ENCODE measurements at regions of chr9 and their contacts with region 1.

Region 1: GRCh38 chr9:88710449-88710848 is 175.5 kb downstream of the NXNL2 start:
- DNase-seq: no peak
- H3K4me3 ChIP-seq: no peak overlapping the region
- H3K27ac ChIP-seq: no peak overlapping the region
- H3K4me1 ChIP-seq: no peaks in the 10 kb centered on the region
- H3K27me3 ChIP-seq: no peaks in the 10 kb centered on the region
- CTCF ChIP-seq: no peak
- POLR2A ChIP-seq: no peak

Region 2: GRCh38 chr9:88411483-88411882 is 299.0 kb before region 1 on chr9:
- intact Hi-C with region 1: no loop called
- DNase-seq: no peak
- H3K4me3 ChIP-seq: no peak overlapping the region
- H3K27ac ChIP-seq: no peak overlapping the region
- H3K4me1 ChIP-seq: peaks cover 0 to 16% (median 5%) of the 10 kb centered on the region in 3 donors
- H3K27me3 ChIP-seq: no peaks in the 10 kb centered on the region
- CTCF ChIP-seq: no peak
- POLR2A ChIP-seq: no peak

Region 3: GRCh38 chr9:88777498-88778312 is 67.3 kb after region 1 on chr9:
- intact Hi-C with region 1: loop called (anchors 10 kb)
- DNase-seq: no peak
- H3K4me3 ChIP-seq: no peak overlapping the region
- H3K27ac ChIP-seq: peak overlapping the region in 1 of 4 donors; percentile 35
- H3K4me1 ChIP-seq: peaks cover 0 to 31% (median 21%) of the 10 kb centered on the region in 3 donors
- H3K27me3 ChIP-seq: no peaks in the 10 kb centered on the region
- CTCF ChIP-seq: no peak
- POLR2A ChIP-seq: no peak

Region 4: GRCh38 chr9:89260525-89260924 is 550.1 kb after region 1 on chr9:
- intact Hi-C with region 1: no loop called
- DNase-seq: no peak
- H3K4me3 ChIP-seq: no peak overlapping the region
- H3K27ac ChIP-seq: no peak overlapping the region
- H3K4me1 ChIP-seq: no peaks in the 10 kb centered on the region
- H3K27me3 ChIP-seq: no peaks in the 10 kb centered on the region
- CTCF ChIP-seq: no peak
- POLR2A ChIP-seq: no peak